Right lobe of liver (tissue), 6 donors: ENCODE measurements at regions of chr11 and their contacts with region 1.

Region 1: GRCh38 chr11:44483919-44484610 is 81.4 kb upstream of the CD82 start:
- DNase-seq: no peak
- ATAC-seq: peak; percentile 43 to 70 (median 60)
- H3K4me3 ChIP-seq: no peak overlapping the region
- H3K27ac ChIP-seq: no peak overlapping the region
- H3K4me1 ChIP-seq: no peaks in the 10 kb centered on the region
- H3K27me3 ChIP-seq: no peaks in the 10 kb centered on the region
- CTCF ChIP-seq: peak in 3 of 4 donors; percentile 36 to 50 (median 42)
- POLR2A ChIP-seq: no peak

Region 2: GRCh38 chr11:44427432-44427831 is 56.6 kb before region 1 on chr11:
- intact Hi-C with region 1: loop called in 1 of 2 experiments (anchors 10 kb)
- DNase-seq: no peak
- ATAC-seq: no peak
- H3K4me3 ChIP-seq: no peak overlapping the region
- H3K27ac ChIP-seq: no peak overlapping the region
- H3K4me1 ChIP-seq: no peaks in the 10 kb centered on the region
- H3K27me3 ChIP-seq: no peaks in the 10 kb centered on the region
- CTCF ChIP-seq: peak in 2 of 4 donors; percentile 19 to 37
- POLR2A ChIP-seq: no peak

Region 3: DNA sequence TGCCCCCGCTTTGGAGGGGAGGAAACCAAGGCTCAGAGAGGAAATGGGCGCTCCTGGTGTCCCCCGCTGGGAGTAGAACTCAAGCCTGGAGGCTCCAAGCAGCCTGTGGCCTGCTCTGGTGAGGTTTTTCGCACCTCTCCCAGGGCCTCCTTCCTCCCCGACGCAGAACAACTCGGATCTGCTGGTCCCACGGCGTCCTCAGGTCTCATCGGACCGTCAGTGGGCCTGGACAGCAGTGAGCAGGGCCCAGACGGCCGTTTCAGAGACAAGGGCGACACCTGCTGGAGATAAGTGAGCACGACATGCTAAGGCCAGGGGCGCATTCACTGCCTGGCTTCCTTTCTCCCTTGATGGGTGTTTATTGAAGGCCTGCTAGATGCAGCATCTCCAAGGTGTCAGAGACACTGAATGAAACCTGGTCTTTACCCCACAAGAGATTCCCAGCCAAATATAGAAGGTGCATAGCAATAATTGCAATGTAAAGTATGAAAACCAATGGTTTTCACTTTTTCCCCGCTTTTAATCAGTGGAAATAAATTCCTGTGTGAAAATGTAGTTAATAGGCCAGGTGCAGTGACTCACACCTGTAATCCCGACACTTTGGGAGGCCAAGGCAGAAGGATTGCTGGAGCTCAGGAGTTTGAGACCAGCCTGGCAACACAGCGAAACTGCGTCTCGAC is 54.5 kb after region 1 on chr11:
- intact Hi-C with region 1: no loop called
- DNase-seq: peak; percentile 75 to 78 (median 76)
- ATAC-seq: peak; percentile 97 to 100 (median 99)
- H3K4me3 ChIP-seq: no peak overlapping the region
- H3K27ac ChIP-seq: no peak overlapping the region
- H3K4me1 ChIP-seq: no peaks in the 10 kb centered on the region
- H3K27me3 ChIP-seq: no peaks in the 10 kb centered on the region
- CTCF ChIP-seq: peak; percentile 90 to 97 (median 96)
- POLR2A ChIP-seq: no peak

Region 4: DNA sequence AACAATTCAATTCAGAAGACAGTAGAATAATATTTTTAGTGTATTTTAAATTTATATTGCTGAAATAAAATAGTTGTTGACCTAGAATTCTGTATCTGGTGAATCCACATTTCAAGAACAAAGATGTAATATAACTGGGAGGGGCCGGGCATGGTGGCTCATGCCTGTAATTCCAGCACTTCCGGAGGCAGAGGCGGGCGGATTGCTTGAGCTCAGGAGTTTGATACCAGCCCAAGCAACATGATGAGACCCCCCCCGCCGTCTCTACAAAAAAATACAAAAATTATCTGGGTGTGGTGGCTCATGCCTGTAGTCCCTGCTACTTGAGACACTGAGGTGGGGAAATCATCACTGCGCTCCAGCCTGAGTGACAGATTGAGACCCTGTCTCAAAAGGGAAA is 154.0 kb after region 1 on chr11:
- intact Hi-C with region 1: no loop called
- DNase-seq: peak in 1 of 3 donors; percentile 19
- ATAC-seq: no peak
- H3K4me3 ChIP-seq: no peak overlapping the region
- H3K27ac ChIP-seq: no peak overlapping the region
- H3K4me1 ChIP-seq: no peaks in the 10 kb centered on the region
- H3K27me3 ChIP-seq: no peaks in the 10 kb centered on the region
- CTCF ChIP-seq: no peak
- POLR2A ChIP-seq: no peak